Endothelial cell of umbilical vein (primary cell): ENCODE measurements at regions of chr1 and their contacts with region 1.

Region 1: GRCh38 chr1:15364740-15365139 is 44.9 kb upstream of the EFHD2 start:
- DNase-seq: no peak
- H3K4me3 ChIP-seq: no peak overlapping the region
- H3K27ac ChIP-seq: no peak overlapping the region
- H3K4me1 ChIP-seq: no peaks in the 10 kb centered on the region
- H3K27me3 ChIP-seq: no peaks in the 10 kb centered on the region
- CTCF ChIP-seq: no peak
- POLR2A ChIP-seq: no peak

Region 2: DNA sequence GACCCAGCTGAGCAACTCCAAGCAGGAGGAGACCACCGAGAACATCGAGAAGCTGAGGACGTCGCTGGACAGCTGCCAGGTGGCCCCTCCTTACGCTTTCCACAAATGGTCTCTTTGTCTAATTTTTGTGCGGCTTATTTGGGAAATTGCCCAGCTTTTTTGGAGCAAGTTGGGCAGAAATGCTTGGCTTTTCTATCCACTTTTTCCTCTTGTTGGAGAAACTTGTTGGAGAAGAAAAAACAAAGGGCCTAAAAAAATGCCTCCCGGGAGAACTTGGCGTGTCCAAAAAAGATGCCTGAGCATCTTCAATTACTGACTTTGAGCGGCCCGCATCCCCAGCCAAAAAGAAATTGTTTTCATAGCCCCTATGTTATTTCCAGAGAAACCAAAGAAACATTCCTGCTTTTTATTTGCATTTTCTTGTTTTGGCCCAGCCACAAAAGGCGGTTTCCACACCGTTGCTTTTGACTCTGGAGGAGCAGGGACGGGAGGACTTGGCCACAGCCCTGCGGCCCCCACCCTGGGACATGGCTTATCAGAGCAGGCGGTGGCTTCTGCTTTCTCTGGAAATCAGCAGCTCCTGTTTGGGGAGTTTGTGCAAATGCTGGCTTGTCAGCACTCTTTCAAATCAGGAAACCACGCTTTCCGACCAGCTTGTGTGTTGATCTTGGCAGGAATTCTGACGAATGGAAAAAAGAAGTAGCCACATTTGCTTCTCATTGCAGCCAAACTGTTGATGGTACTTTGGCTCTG is 36.2 kb before region 1 on chr1:
- CTCF ChIA-PET with region 1: interaction called, 5 read pairs
- POLR2A ChIA-PET with region 1: no interaction called
- dilution Hi-C with region 1: no loop called
- intact Hi-C with region 1: loop called (anchors 2 kb)
- DNase-seq: peak; percentile 90
- H3K4me3 ChIP-seq: peak overlapping the region in 1 of 3 experiments; percentile 14
- H3K27ac ChIP-seq: peak overlapping the region; percentile 37
- H3K4me1 ChIP-seq: peaks cover 17% of the 10 kb centered on the region
- H3K27me3 ChIP-seq: no peaks in the 10 kb centered on the region
- CTCF ChIP-seq: no peak
- POLR2A ChIP-seq: no peak

Region 3: GRCh38 chr1:15339570-15339969 is 25.2 kb before region 1 on chr1:
- CTCF ChIA-PET with region 1: no interaction called
- POLR2A ChIA-PET with region 1: no interaction called
- dilution Hi-C with region 1: no loop called
- intact Hi-C with region 1: no loop called
- DNase-seq: no peak
- H3K4me3 ChIP-seq: no peak overlapping the region
- H3K27ac ChIP-seq: no peak overlapping the region
- H3K4me1 ChIP-seq: peaks cover 44% of the 10 kb centered on the region
- H3K27me3 ChIP-seq: no peaks in the 10 kb centered on the region
- CTCF ChIP-seq: no peak
- POLR2A ChIP-seq: no peak